Activated CD4-positive, alpha-beta T cell treated with anti-CD3 and anti-CD28 coated beads for 36 hours (primary cell): ENCODE measurements at regions of chr22 and their contacts with region 1.

Region 1: DNA sequence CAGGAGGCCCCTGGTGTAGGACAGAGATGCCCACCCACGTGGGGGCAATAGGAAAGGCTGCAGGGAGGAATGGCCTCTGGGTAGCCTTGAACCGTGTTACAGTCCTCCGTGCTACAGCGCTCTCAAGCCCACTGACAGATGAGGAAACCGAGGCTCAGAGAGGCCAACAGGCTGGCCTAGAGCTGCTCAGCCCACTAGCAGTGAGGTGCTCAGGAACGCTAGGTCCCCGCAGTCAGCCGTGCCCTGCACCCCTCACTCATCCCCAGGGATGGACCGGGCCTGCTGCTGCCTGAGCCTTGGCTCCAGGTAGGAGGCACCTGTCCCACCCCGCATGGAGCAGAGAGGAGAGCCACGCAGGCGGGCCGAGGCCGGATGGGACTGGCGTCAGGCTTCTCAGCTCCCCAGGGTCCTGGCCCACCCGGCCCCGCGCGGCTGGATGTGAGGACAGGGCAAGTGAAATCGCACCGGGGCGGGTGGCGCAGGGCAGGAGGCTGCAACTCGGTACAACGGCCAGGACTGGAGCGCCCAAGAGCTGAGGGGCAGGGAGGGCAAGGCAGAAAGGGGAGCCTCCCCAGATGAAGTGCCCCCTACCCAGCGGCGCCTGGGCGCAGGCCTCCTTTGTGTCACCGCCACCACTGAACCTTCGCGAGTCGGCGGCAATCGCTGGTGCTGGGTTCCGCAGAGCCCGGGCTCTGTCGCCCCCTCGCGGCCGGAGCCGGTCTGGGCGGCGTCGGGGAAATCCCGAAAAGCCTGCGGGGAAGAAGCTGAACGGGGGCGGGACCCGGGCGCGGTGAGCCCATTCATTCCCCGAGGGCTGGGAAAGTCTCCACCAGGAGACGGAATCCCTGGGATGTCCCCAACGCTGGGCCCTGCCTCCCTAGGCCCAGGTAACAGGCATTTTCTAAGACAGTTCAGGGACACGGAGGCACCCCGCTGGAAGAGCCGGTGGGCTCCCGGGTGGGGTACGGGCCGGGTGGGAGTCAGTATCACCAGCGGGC is 8.4 kb upstream of the SLC2A11 start:
- DNase-seq: peak; percentile 93
- ATAC-seq: peak; percentile 96
- H3K4me3 Mint-ChIP-seq: no peak overlapping the region
- H3K27ac Mint-ChIP-seq: no peak overlapping the region
- H3K4me1 Mint-ChIP-seq: no peaks in the 10 kb centered on the region
- H3K27me3 Mint-ChIP-seq: no peaks in the 10 kb centered on the region

Region 2: DNA sequence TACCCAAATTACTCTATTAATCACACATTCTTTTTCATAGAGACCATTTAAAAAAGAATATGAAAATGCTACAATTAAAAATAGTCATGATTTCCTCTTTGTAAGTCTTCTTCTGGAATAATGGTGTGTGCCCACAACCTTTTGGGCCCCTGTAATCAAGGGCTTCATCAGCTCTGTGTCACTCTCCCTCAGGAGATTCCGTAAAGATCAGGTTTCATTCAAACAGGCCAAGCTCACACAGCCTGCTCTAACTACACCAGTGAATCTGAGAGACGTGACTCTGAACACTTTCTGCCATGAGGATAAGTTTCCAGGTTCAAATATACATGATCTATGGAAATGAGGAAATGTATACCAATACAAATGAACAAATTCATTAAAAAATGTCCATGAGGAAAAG is 226.7 kb before region 1 on chr22:
- CTCF ChIA-PET with region 1: interaction called, 3 read pairs
- POLR2A ChIA-PET with region 1: no interaction called
- intact Hi-C with region 1: loop called (anchors 5 kb)
- DNase-seq: no peak
- ATAC-seq: no peak
- H3K4me3 Mint-ChIP-seq: no peak overlapping the region
- H3K27ac Mint-ChIP-seq: no peak overlapping the region
- H3K4me1 Mint-ChIP-seq: no peaks in the 10 kb centered on the region
- H3K27me3 Mint-ChIP-seq: no peaks in the 10 kb centered on the region